Endothelial cell of umbilical vein (primary cell): ENCODE measurements at regions of chr7 and their contacts with region 1.

Region 1: GRCh38 chr7:13117103-13117502 is 429.7 kb downstream of the ARL4A start:
- DNase-seq: peak; percentile 62
- H3K4me3 ChIP-seq: no peak overlapping the region
- H3K27ac ChIP-seq: no peak overlapping the region
- H3K4me1 ChIP-seq: no peaks in the 10 kb centered on the region
- H3K27me3 ChIP-seq: no peaks in the 10 kb centered on the region
- CTCF ChIP-seq: peak; percentile 9 to 36
- POLR2A ChIP-seq: no peak

Region 2: GRCh38 chr7:12638851-12639467 is 478.1 kb before region 1 on chr7:
- CTCF ChIA-PET with region 1: interaction called, 6 read pairs
- POLR2A ChIA-PET with region 1: no interaction called
- dilution Hi-C with region 1: no loop called
- intact Hi-C with region 1: loop called (anchors 5 kb)
- DNase-seq: peak; percentile 50
- H3K4me3 ChIP-seq: no peak overlapping the region
- H3K27ac ChIP-seq: no peak overlapping the region
- H3K4me1 ChIP-seq: no peaks in the 10 kb centered on the region
- H3K27me3 ChIP-seq: peaks cover 8 to 9% of the 10 kb centered on the region in 2 experiments
- CTCF ChIP-seq: peak in 1 of 2 donors; percentile 17
- POLR2A ChIP-seq: no peak

Region 3: DNA sequence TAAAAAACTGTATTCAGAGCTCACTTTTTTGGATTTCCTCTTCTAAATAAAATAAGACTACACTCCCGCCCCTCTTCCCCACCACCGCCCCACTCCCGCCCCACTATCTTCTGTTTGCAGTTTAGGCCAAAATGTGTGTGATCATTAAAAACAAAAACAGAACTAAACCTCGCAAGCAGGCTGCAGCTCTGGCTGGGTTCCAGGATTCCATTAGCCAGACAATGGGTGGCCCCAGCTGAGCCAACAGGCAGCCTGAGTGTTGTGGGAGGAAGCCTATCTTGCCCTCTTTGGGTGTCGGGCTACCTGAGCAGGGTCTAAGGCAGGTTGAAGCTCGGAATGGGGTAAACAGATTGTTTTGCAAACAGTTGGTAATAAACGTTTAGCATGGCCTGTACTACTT is 388.0 kb before region 1 on chr7:
- CTCF ChIA-PET with region 1: no interaction called
- POLR2A ChIA-PET with region 1: no interaction called
- dilution Hi-C with region 1: no loop called
- intact Hi-C with region 1: loop called (anchors 1 kb)
- DNase-seq: peak; percentile 94
- H3K4me3 ChIP-seq: no peak overlapping the region
- H3K27ac ChIP-seq: peak overlapping the region; percentile 92
- H3K4me1 ChIP-seq: peaks cover 48% of the 10 kb centered on the region
- H3K27me3 ChIP-seq: no peaks in the 10 kb centered on the region
- CTCF ChIP-seq: no peak
- POLR2A ChIP-seq: no peak

Region 4: GRCh38 chr7:12861070-12861469 is 256.0 kb before region 1 on chr7:
- CTCF ChIA-PET with region 1: interaction called, 3 read pairs
- POLR2A ChIA-PET with region 1: no interaction called
- dilution Hi-C with region 1: no loop called
- intact Hi-C with region 1: loop called (anchors 10 kb)
- DNase-seq: peak; percentile 99
- H3K4me3 ChIP-seq: no peak overlapping the region
- H3K27ac ChIP-seq: peak overlapping the region; percentile 76
- H3K4me1 ChIP-seq: peaks cover 17% of the 10 kb centered on the region
- H3K27me3 ChIP-seq: no peaks in the 10 kb centered on the region
- CTCF ChIP-seq: no peak
- POLR2A ChIP-seq: no peak

Region 5: GRCh38 chr7:13262929-13263530 is 145.9 kb after region 1 on chr7:
- CTCF ChIA-PET with region 1: interaction called, 5 read pairs
- POLR2A ChIA-PET with region 1: no interaction called
- dilution Hi-C with region 1: no loop called
- intact Hi-C with region 1: loop called (anchors 10 kb)
- DNase-seq: peak; percentile 70
- H3K4me3 ChIP-seq: no peak overlapping the region
- H3K27ac ChIP-seq: no peak overlapping the region
- H3K4me1 ChIP-seq: no peaks in the 10 kb centered on the region
- H3K27me3 ChIP-seq: peaks cover 0 to 3% of the 10 kb centered on the region in 2 experiments
- CTCF ChIP-seq: peak; percentile 25 to 33
- POLR2A ChIP-seq: no peak

Region 6: DNA sequence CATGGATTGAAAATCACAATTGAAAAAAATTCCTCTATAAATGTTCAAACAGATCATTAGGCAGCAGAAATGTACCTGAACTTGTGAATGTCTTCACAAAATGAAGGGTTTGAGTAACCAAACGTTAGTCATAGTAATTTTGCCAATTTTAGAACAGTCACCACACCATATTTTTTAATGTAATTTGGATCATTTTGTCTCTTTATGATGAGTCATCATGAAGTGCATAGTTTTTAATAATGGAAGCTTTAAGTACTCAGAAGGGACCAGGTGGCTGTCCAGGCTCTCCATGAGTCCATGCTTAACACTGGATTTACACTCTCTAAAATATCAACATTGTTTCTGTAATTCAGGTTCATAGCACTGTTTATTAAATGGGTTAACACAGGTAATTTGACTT is 653.2 kb after region 1 on chr7:
- CTCF ChIA-PET with region 1: no interaction called
- POLR2A ChIA-PET with region 1: no interaction called
- dilution Hi-C with region 1: no loop called
- intact Hi-C with region 1: no loop called
- DNase-seq: no peak
- H3K4me3 ChIP-seq: no peak overlapping the region
- H3K27ac ChIP-seq: no peak overlapping the region
- H3K4me1 ChIP-seq: no peaks in the 10 kb centered on the region
- H3K27me3 ChIP-seq: no peaks in the 10 kb centered on the region
- CTCF ChIP-seq: no peak
- POLR2A ChIP-seq: no peak